ENCODE measurements at regions of chr2 and their contacts with region 1.

Region 1: DNA sequence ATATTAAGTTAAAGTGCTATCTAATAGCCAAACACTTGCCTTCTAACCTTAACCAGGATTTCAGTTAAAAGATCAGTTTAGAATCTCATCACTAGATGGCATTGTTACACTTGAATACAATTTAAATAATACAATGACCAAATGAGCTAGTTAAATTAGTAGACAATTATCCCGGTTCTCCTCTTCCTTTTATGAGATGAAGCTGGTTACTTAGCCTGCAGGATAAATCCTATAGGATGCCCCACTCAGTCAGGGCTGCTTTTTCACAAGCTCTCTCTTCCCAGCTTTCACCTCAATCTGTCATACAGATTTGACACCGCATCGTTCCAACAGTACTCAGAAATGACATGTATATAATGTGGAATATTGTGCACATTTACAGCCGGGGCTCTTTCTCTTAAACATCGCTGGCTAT is 678.8 kb downstream of the KCNJ3 start:
- DNase-seq: no peak
- H3K4me3 ChIP-seq: no peak overlapping the region
- H3K27ac ChIP-seq: no peak overlapping the region
- H3K4me1 ChIP-seq: no peaks in the 10 kb centered on the region
- H3K27me3 ChIP-seq: no peaks in the 10 kb centered on the region
- CTCF ChIP-seq: peak in 4 of 11 experiments; percentile 8 to 37 (median 20)
- POLR2A ChIP-seq: no peak

Region 2: DNA sequence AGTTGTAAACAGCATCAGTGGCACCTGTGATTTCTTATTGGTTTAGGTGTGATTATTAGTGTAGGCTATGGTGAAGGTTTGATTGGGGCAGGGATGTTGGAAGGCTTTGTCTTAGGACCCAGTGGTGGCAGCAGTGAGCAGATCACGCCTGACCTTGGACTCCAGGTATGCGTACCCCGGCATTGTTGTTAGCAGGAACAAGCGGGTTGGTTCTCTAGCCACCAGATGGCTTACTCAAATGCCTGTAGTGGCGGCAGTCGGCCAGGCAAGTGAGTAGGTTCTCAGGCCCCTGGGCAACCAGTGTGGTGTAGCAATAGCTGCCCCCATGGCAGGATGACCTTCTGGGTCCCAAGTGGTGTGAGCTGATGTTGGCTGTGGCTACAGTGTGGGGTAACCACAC is 120.5 kb before region 1 on chr2:
- intact Hi-C with region 1: no loop called
- DNase-seq: no peak
- H3K4me3 ChIP-seq: no peak overlapping the region
- H3K27ac ChIP-seq: no peak overlapping the region
- H3K4me1 ChIP-seq: no peaks in the 10 kb centered on the region
- H3K27me3 ChIP-seq: no peaks in the 10 kb centered on the region
- CTCF ChIP-seq: no peak
- POLR2A ChIP-seq: no peak

Region 3: DNA sequence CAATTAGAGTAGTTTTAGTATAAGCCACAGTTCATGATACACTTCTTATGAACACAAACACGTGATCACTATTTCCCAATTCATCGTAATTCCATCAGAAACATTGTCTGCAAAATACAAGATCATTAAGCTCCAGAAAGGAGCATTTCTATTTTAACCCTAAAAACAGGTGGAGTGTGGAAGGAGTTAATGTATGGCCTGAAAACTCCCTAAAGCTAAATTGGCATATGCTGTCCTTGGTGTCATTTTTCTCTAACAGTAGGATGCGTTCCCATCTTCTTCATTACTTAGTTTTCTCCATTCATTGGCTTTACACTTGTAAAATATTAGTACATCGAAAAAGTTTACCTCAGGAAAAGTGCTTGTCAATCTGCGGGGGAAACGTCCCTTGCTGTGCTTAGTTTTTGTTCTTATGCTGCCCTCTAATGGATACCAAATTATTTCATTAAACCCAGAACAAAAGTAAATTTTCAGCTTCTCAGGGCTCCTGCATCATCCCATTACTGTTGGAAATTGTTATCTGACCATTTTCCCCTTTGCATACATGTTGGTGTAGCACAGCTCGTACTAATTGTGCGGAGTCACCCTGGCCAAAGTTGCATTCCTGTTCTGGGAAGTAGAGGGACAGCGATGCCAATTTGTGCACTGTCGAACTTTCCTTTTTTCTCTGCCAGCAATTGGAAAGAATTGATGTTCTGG is 1212.3 kb after region 1 on chr2:
- intact Hi-C with region 1: loop called (anchors 10 kb)
- DNase-seq: no peak
- H3K4me3 ChIP-seq: no peak overlapping the region
- H3K27ac ChIP-seq: no peak overlapping the region
- H3K4me1 ChIP-seq: peaks cover 0 to 10% (median 2%) of the 10 kb centered on the region in 6 donors
- H3K27me3 ChIP-seq: no peaks in the 10 kb centered on the region
- CTCF ChIP-seq: peak in 10 of 11 experiments; percentile 11 to 57 (median 42)
- POLR2A ChIP-seq: no peak

Region 4: DNA sequence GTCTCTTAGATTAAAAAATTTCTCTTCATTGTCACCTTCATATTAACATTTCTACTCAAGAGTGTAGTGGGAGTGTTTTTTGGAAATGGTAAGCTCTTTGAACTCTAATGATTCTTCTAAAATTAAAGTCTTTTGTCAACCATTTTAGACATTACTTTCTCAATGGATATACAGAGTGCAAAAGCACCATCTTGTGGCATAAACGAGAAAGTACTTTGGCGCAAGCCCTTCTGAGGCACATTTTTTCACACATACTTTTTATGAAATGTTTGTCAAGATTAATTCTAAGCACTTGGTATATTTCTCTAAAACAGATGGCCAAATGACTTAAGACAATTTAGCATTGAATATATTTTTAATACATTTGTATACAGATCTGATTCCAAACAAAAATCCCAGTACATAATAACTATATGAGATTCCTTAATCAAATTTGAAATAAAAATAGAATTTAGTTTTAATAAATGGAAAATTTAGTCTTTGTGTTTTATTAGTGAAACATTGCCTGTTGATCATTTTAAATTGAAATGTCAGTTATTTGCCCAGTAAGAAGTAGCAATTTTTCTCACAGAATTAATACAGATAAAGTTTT is 1816.9 kb after region 1 on chr2:
- intact Hi-C with region 1: loop called (anchors 10 kb)
- DNase-seq: no peak
- H3K4me3 ChIP-seq: no peak overlapping the region
- H3K27ac ChIP-seq: no peak overlapping the region
- H3K4me1 ChIP-seq: peaks cover 0 to 8% (median 0%) of the 10 kb centered on the region in 6 donors
- H3K27me3 ChIP-seq: no peaks in the 10 kb centered on the region
- CTCF ChIP-seq: peak in 10 of 11 experiments; percentile 16 to 68 (median 61)
- POLR2A ChIP-seq: no peak